ENCODE measurements at regions of chr14 and their contacts with region 1.

Region 1: GRCh38 chr14:76050797-76051392 is 65.3 kb downstream of the IFT43 start:
- DNase-seq: peak; percentile 17
- H3K4me3 ChIP-seq: no peak overlapping the region
- CTCF ChIP-seq: peak; percentile 51

Region 2: GRCh38 chr14:76040704-76041103 is 10.2 kb before region 1 on chr14:
- CTCF ChIA-PET with region 1: interaction called, 22 read pairs
- POLR2A ChIA-PET with region 1: no interaction called
- DNase-seq: no peak
- H3K4me3 ChIP-seq: no peak overlapping the region
- CTCF ChIP-seq: no peak

Region 3: GRCh38 chr14:76080025-76080424 is 29.1 kb after region 1 on chr14:
- CTCF ChIA-PET with region 1: interaction called, 10 read pairs
- POLR2A ChIA-PET with region 1: no interaction called
- DNase-seq: no peak
- H3K4me3 ChIP-seq: no peak overlapping the region
- CTCF ChIP-seq: no peak

Region 4: DNA sequence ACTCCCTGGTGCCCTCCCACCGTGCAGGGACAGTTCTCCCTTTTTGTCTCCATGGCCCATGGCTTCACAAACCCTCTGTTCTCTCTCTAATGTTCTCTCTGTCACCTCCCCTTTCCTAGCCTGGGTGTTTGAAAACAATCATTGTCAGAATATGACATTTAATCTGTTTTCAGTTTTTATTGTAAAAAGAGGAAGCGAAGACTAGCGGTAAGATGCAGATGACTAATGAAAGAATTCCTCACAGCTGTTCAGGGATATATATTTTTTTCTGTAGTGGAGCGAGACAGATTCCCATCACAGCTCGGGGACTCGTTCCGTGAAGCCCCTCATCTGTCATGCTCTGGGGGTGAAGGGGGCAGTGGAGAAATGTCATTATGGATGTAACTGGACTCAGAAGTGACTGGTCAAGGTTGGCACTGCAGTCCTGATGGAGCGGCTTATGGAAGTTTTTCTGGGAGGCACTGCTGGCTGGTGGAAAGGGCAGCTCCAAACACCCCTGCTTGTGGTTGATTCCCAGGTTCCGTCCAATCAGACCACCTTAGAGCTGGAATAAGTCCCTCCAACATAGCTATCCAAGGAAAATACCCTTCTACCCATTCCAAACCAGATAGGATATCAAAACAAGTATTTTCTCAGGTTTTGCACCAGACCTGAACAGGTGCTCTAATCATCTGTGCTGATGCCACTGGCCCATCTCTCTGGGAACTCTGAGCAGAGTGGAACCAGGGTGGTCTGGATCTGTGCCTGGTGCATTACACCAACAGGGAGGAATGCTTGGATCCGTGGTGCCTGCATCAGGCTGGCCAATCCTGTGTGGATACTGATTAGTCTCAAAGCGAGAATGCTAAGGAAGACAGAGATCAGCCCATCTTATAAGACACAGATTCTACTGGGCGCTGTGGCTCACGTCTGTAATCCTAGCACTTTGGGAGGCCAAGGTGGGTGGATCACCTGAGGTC is 185.6 kb after region 1 on chr14:
- CTCF ChIA-PET with region 1: no interaction called
- POLR2A ChIA-PET with region 1: no interaction called
- DNase-seq: no peak
- H3K4me3 ChIP-seq: no peak overlapping the region
- CTCF ChIP-seq: no peak

Region 5: DNA sequence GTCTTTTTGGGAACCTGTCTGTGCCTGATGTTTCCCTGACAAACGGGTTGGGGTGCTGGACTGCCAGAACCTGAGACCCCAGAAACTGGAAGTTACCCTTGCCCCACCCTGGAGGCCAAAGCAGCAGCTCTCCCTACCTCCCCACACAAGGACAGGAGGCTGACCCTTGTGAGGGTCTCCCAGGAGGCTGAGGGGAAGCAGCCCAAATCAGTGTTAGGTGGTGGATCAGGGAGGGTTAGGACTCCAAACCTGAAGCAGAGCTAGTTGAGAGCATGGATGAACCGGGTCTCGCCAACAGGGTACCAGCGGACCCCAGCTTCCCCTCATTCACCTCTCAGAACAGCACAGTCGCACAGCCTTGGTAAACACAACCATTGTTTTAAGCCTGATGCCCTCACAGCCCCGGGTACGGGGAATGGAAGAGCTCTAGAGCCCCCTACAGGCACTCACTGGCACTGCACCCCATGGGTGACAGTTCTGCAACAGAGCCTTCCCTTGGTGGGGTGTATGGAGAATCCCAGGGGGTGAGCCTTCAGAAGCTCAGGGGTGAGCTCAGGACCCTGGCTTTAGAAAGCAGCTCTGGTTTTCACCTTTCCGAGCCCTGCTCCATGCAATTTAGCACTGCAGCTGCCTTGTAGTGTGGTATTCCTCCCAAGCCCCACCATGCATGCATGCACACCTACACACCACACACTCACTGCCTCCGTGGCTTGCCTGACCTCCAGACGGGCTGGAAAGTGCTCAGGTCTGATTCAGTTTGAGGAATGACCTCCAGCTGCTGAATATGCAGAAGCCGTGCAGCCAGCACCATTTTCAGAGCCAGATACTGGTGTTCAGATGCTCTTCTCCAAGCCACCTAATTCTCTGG is 336.3 kb after region 1 on chr14:
- CTCF ChIA-PET with region 1: interaction called, 104 read pairs
- POLR2A ChIA-PET with region 1: no interaction called
- DNase-seq: no peak
- H3K4me3 ChIP-seq: no peak overlapping the region
- CTCF ChIP-seq: peak; percentile 95

Region 6: GRCh38 chr14:76617440-76617839 is 566.5 kb after region 1 on chr14:
- CTCF ChIA-PET with region 1: no interaction called
- POLR2A ChIA-PET with region 1: no interaction called
- DNase-seq: no peak
- H3K4me3 ChIP-seq: no peak overlapping the region
- CTCF ChIP-seq: no peak

Measured in AG04449 (cell line).